GM12878 (cell line): ENCODE measurements at regions of chr22 and their contacts with region 1.

Region 1: GRCh38 chr22:36454916-36455570 is 26.4 kb downstream of the TXN2 start:
- DNase-seq: peak; percentile 50
- ATAC-seq: peak; percentile 80
- H3K4me3 ChIP-seq: peak overlapping the region; percentile 83
- H3K27ac ChIP-seq: peak overlapping the region; percentile 73
- H3K4me1 ChIP-seq: peaks cover 37% of the 10 kb centered on the region
- H3K27me3 ChIP-seq: no peaks in the 10 kb centered on the region
- CTCF ChIP-seq: peak in 2 of 3 experiments; percentile 10 to 23; a peak in 2 of 6 replicates
- EP300 ChIP-seq: no peak; a peak in 1 of 4 replicates
- POLR2A ChIP-seq: peak; percentile 82
- RAD21 ChIP-seq: peak; percentile 30; the same call in 1 of the 2 replicates

Region 2: GRCh38 chr22:36481393-36482168 is 26.5 kb after region 1 on chr22 and contains the start of gene TXN2:
- CTCF ChIA-PET with region 1: interaction called, 11 read pairs
- POLR2A ChIA-PET with region 1: interaction called, 4 read pairs
- RAD21 ChIA-PET with region 1: interaction called, 4 read pairs
- SMC1A ChIA-PET with region 1: interaction called, 4 read pairs
- in situ Hi-C with region 1: no loop called
- intact Hi-C with region 1: loop called (anchors 2 kb)
- DNase-seq: peak; percentile 82
- ATAC-seq: peak; percentile 94
- H3K4me3 ChIP-seq: peak within 1 kb of the TSS; percentile 96
- H3K27ac ChIP-seq: peak within 1 kb of the TSS; percentile 95
- H3K4me1 ChIP-seq: peaks cover 6% of the 10 kb centered on the region
- H3K27me3 ChIP-seq: no peaks in the 10 kb centered on the region
- CTCF ChIP-seq: no peak
- EP300 ChIP-seq: no peak
- POLR2A ChIP-seq: peak; percentile 99
- RAD21 ChIP-seq: no peak
- polyA plus RNA-seq, gene TXN2: 330 to 350 TPM

Region 3: GRCh38 chr22:36486619-36487384 is 31.8 kb after region 1 on chr22:
- CTCF ChIA-PET with region 1: interaction called, 11 read pairs
- POLR2A ChIA-PET with region 1: interaction called, 4 read pairs
- RAD21 ChIA-PET with region 1: no interaction called
- SMC1A ChIA-PET with region 1: interaction called, 3 read pairs
- in situ Hi-C with region 1: no loop called
- intact Hi-C with region 1: no loop called
- DNase-seq: no peak
- ATAC-seq: peak; percentile 25; the same call in 2 of the 3 replicates
- H3K4me3 ChIP-seq: no peak overlapping the region
- H3K27ac ChIP-seq: no peak overlapping the region
- H3K4me1 ChIP-seq: no peaks in the 10 kb centered on the region
- H3K27me3 ChIP-seq: no peaks in the 10 kb centered on the region
- CTCF ChIP-seq: peak; percentile 48 to 61 (median 55)
- EP300 ChIP-seq: no peak
- POLR2A ChIP-seq: no peak
- RAD21 ChIP-seq: peak; percentile 53